ENCODE measurements at regions of chr1 and their contacts with region 1.

Region 1: GRCh38 chr1:16971341-16972188 is 8.9 kb downstream of the MFAP2 start:
- DNase-seq: peak in 1 of 2 experiments; percentile 81
- H3K4me3 ChIP-seq: no peak overlapping the region
- H3K27ac ChIP-seq: 0 out of 2 replicates have a peak overlapping the region, but pooled peaks have one; percentile 11
- H3K4me1 ChIP-seq: peaks cover 0 to 11% (median 8%) of the 10 kb centered on the region in 4 experiments; a peak in 6 of 7 replicates
- H3K27me3 ChIP-seq: no peaks in the 10 kb centered on the region
- CTCF ChIP-seq: no peak
- EP300 ChIP-seq: no peak
- POLR2A ChIP-seq: no peak; a peak in 1 of 3 replicates
- RAD21 ChIP-seq: no peak

Region 2: GRCh38 chr1:16960560-16961296 is 10.8 kb before region 1 on chr1:
- CTCF ChIA-PET with region 1: interaction called, 19 read pairs
- POLR2A ChIA-PET with region 1: interaction called, 8 read pairs
- DNase-seq: peak; percentile 84 to 97
- H3K4me3 ChIP-seq: peak overlapping the region; percentile 5 to 46 (median 23); a peak in 7 of 8 replicates
- H3K27ac ChIP-seq: no peak overlapping the region
- H3K4me1 ChIP-seq: no peaks in the 10 kb centered on the region
- H3K27me3 ChIP-seq: no peaks in the 10 kb centered on the region
- CTCF ChIP-seq: peak; percentile 80 to 87 (median 84)
- EP300 ChIP-seq: 0 out of 3 replicates have a peak, but pooled peaks of 1 of the 2 experiments have one; percentile 25
- POLR2A ChIP-seq: peak in 1 of 2 experiments; percentile 66; a peak in 2 of 3 replicates
- RAD21 ChIP-seq: peak; percentile 47 to 53

Region 3: GRCh38 chr1:17055801-17056200 is 84.2 kb after region 1 on chr1:
- CTCF ChIA-PET with region 1: no interaction called
- POLR2A ChIA-PET with region 1: no interaction called
- DNase-seq: no peak
- H3K4me3 ChIP-seq: no peak overlapping the region
- H3K27ac ChIP-seq: no peak overlapping the region
- H3K4me1 ChIP-seq: peaks cover 4 to 13% (median 7%) of the 10 kb centered on the region in 4 experiments; a peak in 5 of 7 replicates
- H3K27me3 ChIP-seq: no peaks in the 10 kb centered on the region
- CTCF ChIP-seq: no peak
- EP300 ChIP-seq: no peak
- POLR2A ChIP-seq: no peak
- RAD21 ChIP-seq: no peak